ENCODE measurements at regions of chr12 and their contacts with region 1.

Region 1: DNA sequence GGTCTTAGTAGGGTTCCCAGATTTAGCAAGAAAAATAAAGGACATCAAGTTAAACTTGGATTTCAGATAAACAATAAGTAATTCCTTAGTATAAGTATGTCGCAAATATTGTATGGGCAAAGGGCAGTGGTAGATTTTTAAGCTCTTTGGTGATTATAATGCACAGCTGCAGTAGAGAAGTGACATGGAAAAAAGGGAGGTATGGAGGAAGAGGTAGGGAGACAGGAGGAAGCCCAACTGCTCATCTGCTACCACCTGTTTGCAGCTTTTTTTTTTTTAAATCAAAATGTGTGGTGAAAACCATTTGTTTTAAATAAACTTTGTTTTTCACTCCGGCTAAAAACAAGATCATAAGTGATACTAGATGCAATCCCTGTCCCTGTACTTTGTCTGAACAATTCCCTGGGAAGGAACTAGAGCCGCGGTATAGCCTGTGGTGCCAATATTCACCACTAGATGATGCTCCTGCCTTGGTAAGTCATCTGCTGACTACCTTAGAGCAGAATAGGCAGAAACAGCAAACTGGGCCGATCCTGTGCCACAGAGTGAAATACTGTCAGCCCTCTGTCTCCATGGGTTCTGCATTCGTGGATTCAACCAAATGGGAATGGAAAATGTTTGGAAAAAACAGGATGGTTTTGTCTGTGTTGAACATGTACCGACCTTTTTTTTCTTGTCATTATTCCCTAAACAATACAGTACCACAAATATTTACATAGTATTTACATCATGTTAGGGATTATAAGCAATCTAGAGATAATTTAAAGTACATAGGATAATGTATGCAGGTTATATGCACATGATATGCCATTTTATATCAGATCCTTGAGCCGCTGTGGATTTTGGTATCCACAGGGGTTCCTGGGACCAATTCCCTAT is 62.4 kb upstream of the PLBD1 start:
- DNase-seq: peak; percentile 71
- H3K4me3 Mint-ChIP-seq: no peak overlapping the region
- H3K27ac Mint-ChIP-seq: no peak overlapping the region
- H3K4me1 Mint-ChIP-seq: no peaks in the 10 kb centered on the region
- H3K27me3 Mint-ChIP-seq: no peaks in the 10 kb centered on the region

Region 2: DNA sequence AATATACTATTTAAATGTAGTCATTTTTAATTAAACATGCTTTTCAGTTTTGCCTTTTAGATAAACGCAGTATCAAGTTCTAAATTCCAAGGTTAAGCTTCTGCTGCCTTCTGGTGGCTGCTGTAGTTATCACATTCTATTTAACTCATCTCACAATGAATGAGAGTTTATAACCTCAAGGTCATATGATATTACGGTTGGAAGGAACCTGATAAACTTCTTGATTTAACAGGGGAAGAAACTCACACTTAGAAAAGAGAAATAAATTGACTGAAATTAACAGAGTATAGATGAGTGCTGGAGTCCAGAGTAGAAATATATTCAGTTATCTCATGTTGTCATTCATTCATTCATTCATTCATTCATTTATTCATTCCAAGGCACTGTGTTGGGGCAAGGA is 34.4 kb after region 1 on chr12:
- CTCF ChIA-PET with region 1: interaction called, 44 read pairs
- POLR2A ChIA-PET with region 1: no interaction called
- intact Hi-C with region 1: loop called (anchors 1 kb)
- DNase-seq: peak; percentile 15
- H3K4me3 Mint-ChIP-seq: no peak overlapping the region
- H3K27ac Mint-ChIP-seq: no peak overlapping the region
- H3K4me1 Mint-ChIP-seq: peaks cover 7% of the 10 kb centered on the region
- H3K27me3 Mint-ChIP-seq: no peaks in the 10 kb centered on the region

Region 3: DNA sequence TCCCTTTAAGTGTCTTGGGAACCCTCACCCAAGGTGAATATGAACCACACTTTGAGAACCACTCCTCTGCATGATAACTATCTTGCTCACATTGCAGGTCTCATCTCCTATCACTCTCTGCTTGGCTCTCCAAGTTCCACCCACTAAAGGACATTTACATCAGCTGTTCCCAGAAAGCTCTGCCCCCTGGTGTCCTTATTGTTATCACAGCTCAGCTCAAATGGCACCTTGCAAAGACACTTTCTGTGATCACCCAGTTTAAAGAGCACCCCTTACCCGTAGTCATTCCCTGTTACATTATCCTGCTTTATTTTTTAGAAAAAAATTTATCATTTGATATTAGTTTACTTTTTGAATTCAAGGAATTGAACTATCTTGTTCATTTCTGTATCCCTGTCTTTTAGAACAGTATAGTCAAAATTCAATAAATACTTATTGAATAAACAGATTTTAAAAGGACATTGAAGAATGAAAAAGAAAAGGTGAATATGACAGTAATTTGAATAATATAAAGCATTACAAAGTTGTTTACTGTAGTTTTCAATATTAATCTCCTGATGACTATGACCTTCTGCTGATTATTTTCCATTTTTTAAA is 86.9 kb after region 1 on chr12:
- CTCF ChIA-PET with region 1: interaction called, 27 read pairs
- POLR2A ChIA-PET with region 1: no interaction called
- intact Hi-C with region 1: loop called (anchors 1 kb)
- DNase-seq: peak; percentile 58
- H3K4me3 Mint-ChIP-seq: no peak overlapping the region
- H3K27ac Mint-ChIP-seq: no peak overlapping the region
- H3K4me1 Mint-ChIP-seq: peaks cover 2% of the 10 kb centered on the region
- H3K27me3 Mint-ChIP-seq: peaks cover 3% of the 10 kb centered on the region